Mammary epithelial cell (primary cell): ENCODE measurements at regions of chr2 and their contacts with region 1.

Region 1: GRCh38 chr2:203928849-203929248 is 7.7 kb upstream of the ICOS start:
- DNase-seq: no peak
- H3K4me3 ChIP-seq: no peak overlapping the region
- H3K27ac ChIP-seq: no peak overlapping the region
- H3K4me1 ChIP-seq: no peaks in the 10 kb centered on the region
- H3K27me3 ChIP-seq: no peaks in the 10 kb centered on the region
- CTCF ChIP-seq: peak; percentile 35 to 57

Region 2: GRCh38 chr2:204012072-204012653 is 83.3 kb after region 1 on chr2:
- CTCF ChIA-PET with region 1: no interaction called
- dilution Hi-C with region 1: no loop called
- in situ Hi-C with region 1: no loop called
- intact Hi-C with region 1: loop called (anchors 5 kb)
- DNase-seq: peak; percentile 73
- H3K4me3 ChIP-seq: no peak overlapping the region
- H3K27ac ChIP-seq: no peak overlapping the region
- H3K4me1 ChIP-seq: peaks cover 22% of the 10 kb centered on the region
- H3K27me3 ChIP-seq: no peaks in the 10 kb centered on the region
- CTCF ChIP-seq: no peak